ENCODE measurements at regions of chr1 and their contacts with region 1.

Region 1: GRCh38 chr1:154324669-154325582 is at the start of gene ATP8B2:
- DNase-seq: peak; percentile 60 to 82 (median 77)
- ATAC-seq: peak; percentile 80
- H3K4me3 ChIP-seq: peak within 1 kb of the TSS; percentile 79
- H3K4me3 Mint-ChIP-seq: peak within 1 kb of the TSS; percentile 92 to 98 (median 96)
- H3K27ac ChIP-seq: peak within 1 kb of the TSS; percentile 94
- H3K27ac Mint-ChIP-seq: peak within 1 kb of the TSS; percentile 80 to 95 (median 92)
- H3K4me1 ChIP-seq: peaks cover 24 to 36% of the 10 kb centered on the region in 2 donors
- H3K4me1 Mint-ChIP-seq: peaks cover 27 to 42% (median 38%) of the 10 kb centered on the region in 7 donors
- H3K27me3 ChIP-seq: no peaks in the 10 kb centered on the region
- H3K27me3 Mint-ChIP-seq: peaks cover 0 to 31% (median 0%) of the 10 kb centered on the region in 5 donors
- total RNA-seq, gene ATP8B2: 105 to 130 (median 117) TPM

Region 2: DNA sequence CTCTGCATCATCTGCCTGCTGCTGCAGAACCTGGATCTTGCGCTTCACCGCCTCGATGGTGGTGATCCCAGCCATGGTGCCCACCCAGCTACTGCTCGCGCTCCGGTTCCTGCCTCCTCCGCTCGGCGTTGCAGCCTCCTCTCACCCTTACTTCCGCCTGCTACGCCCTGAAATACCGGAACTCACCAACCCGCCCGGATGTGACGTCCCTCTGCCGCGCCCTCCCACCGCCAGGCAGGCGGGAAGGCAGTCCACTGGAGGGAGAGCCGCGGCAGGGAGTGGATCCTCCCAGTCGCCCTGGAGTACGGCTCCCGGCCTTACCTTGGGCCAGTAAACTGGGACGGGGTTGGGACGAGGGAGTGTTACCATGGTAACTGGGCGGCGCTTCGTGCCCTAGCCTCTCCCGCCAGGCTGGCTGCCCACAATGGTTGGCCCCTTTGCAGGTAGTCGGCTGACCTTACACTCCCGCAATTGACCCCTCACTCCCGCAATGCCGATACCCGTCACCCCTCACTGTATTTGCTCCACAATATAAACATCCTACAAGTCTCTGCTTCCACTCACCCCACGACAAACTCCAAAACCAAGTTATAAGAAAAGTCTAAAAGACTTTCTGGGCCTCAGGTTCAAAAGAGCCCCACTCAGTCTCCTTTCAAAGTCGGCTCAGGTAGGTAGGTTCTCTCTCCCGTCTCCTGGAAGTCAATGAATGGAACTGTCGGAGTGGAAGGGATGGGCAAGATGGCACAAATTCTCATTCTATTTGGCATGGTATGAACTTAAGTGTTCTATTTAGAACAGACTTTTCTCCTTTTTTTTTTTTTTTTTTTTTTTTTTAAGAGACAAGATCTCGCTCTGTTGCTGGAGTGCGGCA is 141.6 kb before region 1 on chr1:
- CTCF ChIA-PET with region 1: no interaction called
- POLR2A ChIA-PET with region 1: no interaction called
- intact Hi-C with region 1: loop called (anchors 2 kb)
- DNase-seq: peak; percentile 84 to 94 (median 94)
- ATAC-seq: peak; percentile 89
- H3K4me3 ChIP-seq: peak overlapping the region; percentile 93
- H3K4me3 Mint-ChIP-seq: peak overlapping the region; percentile 98 to 100 (median 100)
- H3K27ac ChIP-seq: peak overlapping the region; percentile 95
- H3K27ac Mint-ChIP-seq: peak overlapping the region; percentile 98 to 100 (median 99)
- H3K4me1 ChIP-seq: peaks cover 25 to 44% of the 10 kb centered on the region in 2 donors
- H3K4me1 Mint-ChIP-seq: peaks cover 44 to 49% (median 48%) of the 10 kb centered on the region in 7 donors
- H3K27me3 ChIP-seq: no peaks in the 10 kb centered on the region
- H3K27me3 Mint-ChIP-seq: peaks cover 0 to 7% (median 0%) of the 10 kb centered on the region in 5 donors

Region 3: DNA sequence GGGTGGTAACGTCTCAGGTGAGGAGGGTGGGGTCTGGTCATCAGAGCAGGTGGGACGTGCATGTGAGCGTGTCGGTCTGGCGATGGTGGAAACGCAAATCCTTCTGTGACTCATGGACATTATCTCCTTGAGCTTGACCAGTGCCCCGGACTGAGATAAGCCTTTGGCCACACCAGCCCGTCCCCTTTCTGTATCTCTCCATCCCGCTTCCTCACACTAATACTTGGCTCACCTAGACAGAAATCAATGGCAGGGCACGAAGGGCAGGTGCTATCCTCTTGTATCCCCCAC is 11.9 kb before region 1 on chr1:
- CTCF ChIA-PET with region 1: no interaction called
- POLR2A ChIA-PET with region 1: no interaction called
- intact Hi-C with region 1: no loop called
- DNase-seq: no peak
- ATAC-seq: no peak
- H3K4me3 ChIP-seq: no peak overlapping the region
- H3K4me3 Mint-ChIP-seq: no peak overlapping the region
- H3K27ac ChIP-seq: no peak overlapping the region
- H3K27ac Mint-ChIP-seq: no peak overlapping the region
- H3K4me1 ChIP-seq: no peaks in the 10 kb centered on the region
- H3K4me1 Mint-ChIP-seq: peaks cover 0 to 6% (median 0%) of the 10 kb centered on the region in 7 donors
- H3K27me3 ChIP-seq: no peaks in the 10 kb centered on the region
- H3K27me3 Mint-ChIP-seq: peaks cover 0 to 11% (median 0%) of the 10 kb centered on the region in 5 donors

Region 4: GRCh38 chr1:154335025-154335714 is 10.2 kb after region 1 on chr1:
- CTCF ChIA-PET with region 1: interaction called, 89 read pairs
- POLR2A ChIA-PET with region 1: interaction called, 160 read pairs
- intact Hi-C with region 1: loop called (anchors 1 kb)
- DNase-seq: peak; percentile 74 to 91 (median 87)
- ATAC-seq: peak; percentile 99
- H3K4me3 ChIP-seq: peak overlapping the region; percentile 23
- H3K4me3 Mint-ChIP-seq: peak overlapping the region; percentile 60 to 85 (median 72)
- H3K27ac ChIP-seq: peak overlapping the region; percentile 68
- H3K27ac Mint-ChIP-seq: peak overlapping the region; percentile 87 to 97 (median 95)
- H3K4me1 ChIP-seq: peaks cover 73% of the 10 kb centered on the region in 2 donors
- H3K4me1 Mint-ChIP-seq: peaks cover 50 to 88% (median 77%) of the 10 kb centered on the region in 7 donors
- H3K27me3 ChIP-seq: no peaks in the 10 kb centered on the region
- H3K27me3 Mint-ChIP-seq: no peaks in the 10 kb centered on the region

Region 5: GRCh38 chr1:154344977-154345837 is 20.3 kb after region 1 on chr1:
- CTCF ChIA-PET with region 1: interaction called, 129 read pairs
- POLR2A ChIA-PET with region 1: interaction called, 160 read pairs
- intact Hi-C with region 1: loop called (anchors 1 to 2 kb)
- DNase-seq: peak; percentile 56 to 79 (median 71)
- ATAC-seq: peak; percentile 55
- H3K4me3 ChIP-seq: peak overlapping the region; percentile 83
- H3K4me3 Mint-ChIP-seq: peak overlapping the region; percentile 79 to 98 (median 92)
- H3K27ac ChIP-seq: peak overlapping the region; percentile 61
- H3K27ac Mint-ChIP-seq: peak overlapping the region; percentile 31 to 100 (median 96)
- H3K4me1 ChIP-seq: peaks cover 60 to 71% of the 10 kb centered on the region in 2 donors
- H3K4me1 Mint-ChIP-seq: peaks cover 64 to 96% (median 73%) of the 10 kb centered on the region in 7 donors
- H3K27me3 ChIP-seq: no peaks in the 10 kb centered on the region
- H3K27me3 Mint-ChIP-seq: no peaks in the 10 kb centered on the region

Region 6: GRCh38 chr1:154352581-154353459 is 27.9 kb after region 1 on chr1:
- CTCF ChIA-PET with region 1: interaction called, 129 read pairs
- POLR2A ChIA-PET with region 1: interaction called, 160 read pairs
- intact Hi-C with region 1: loop called in 1 of 2 experiments (anchors 1 kb)
- DNase-seq: peak in 8 of 9 donors; percentile 45 to 58 (median 52)
- ATAC-seq: peak; percentile 84
- H3K4me3 ChIP-seq: peak overlapping the region; percentile 79
- H3K4me3 Mint-ChIP-seq: peak overlapping the region; percentile 76 to 98 (median 91)
- H3K27ac ChIP-seq: peak overlapping the region; percentile 74
- H3K27ac Mint-ChIP-seq: peak overlapping the region; percentile 66 to 97 (median 88)
- H3K4me1 ChIP-seq: peaks cover 13 to 32% of the 10 kb centered on the region in 2 donors
- H3K4me1 Mint-ChIP-seq: peaks cover 29 to 64% (median 48%) of the 10 kb centered on the region in 7 donors
- H3K27me3 ChIP-seq: no peaks in the 10 kb centered on the region
- H3K27me3 Mint-ChIP-seq: peaks cover 0 to 2% (median 0%) of the 10 kb centered on the region in 5 donors

Region 7: GRCh38 chr1:154463512-154463990 is 138.6 kb after region 1 on chr1:
- CTCF ChIA-PET with region 1: no interaction called
- POLR2A ChIA-PET with region 1: no interaction called
- intact Hi-C with region 1: no loop called
- DNase-seq: peak in 8 of 9 donors; percentile 50 to 79 (median 70)
- ATAC-seq: peak; percentile 82
- H3K4me3 ChIP-seq: no peak overlapping the region
- H3K4me3 Mint-ChIP-seq: peak overlapping the region; percentile 58 to 96 (median 80)
- H3K27ac ChIP-seq: peak overlapping the region; percentile 78
- H3K27ac Mint-ChIP-seq: peak overlapping the region; percentile 86 to 96 (median 94)
- H3K4me1 ChIP-seq: peaks cover 38 to 78% of the 10 kb centered on the region in 2 donors
- H3K4me1 Mint-ChIP-seq: peaks cover 58 to 94% (median 81%) of the 10 kb centered on the region in 7 donors
- H3K27me3 ChIP-seq: no peaks in the 10 kb centered on the region
- H3K27me3 Mint-ChIP-seq: no peaks in the 10 kb centered on the region

Region 8: GRCh38 chr1:154546264-154547063 is 221.5 kb after region 1 on chr1:
- CTCF ChIA-PET with region 1: interaction called, 3 read pairs
- POLR2A ChIA-PET with region 1: no interaction called
- intact Hi-C with region 1: loop called in 1 of 2 experiments (anchors 1 kb)
- DNase-seq: peak; percentile 18 to 56 (median 42)
- ATAC-seq: peak; percentile 89
- H3K4me3 ChIP-seq: no peak overlapping the region
- H3K4me3 Mint-ChIP-seq: no peak overlapping the region
- H3K27ac ChIP-seq: no peak overlapping the region
- H3K27ac Mint-ChIP-seq: peak overlapping the region in 5 of 9 donors; percentile 14 to 57 (median 21)
- H3K4me1 ChIP-seq: no peaks in the 10 kb centered on the region
- H3K4me1 Mint-ChIP-seq: peaks cover 2 to 28% (median 15%) of the 10 kb centered on the region in 7 donors
- H3K27me3 ChIP-seq: no peaks in the 10 kb centered on the region
- H3K27me3 Mint-ChIP-seq: peaks cover 0 to 10% (median 0%) of the 10 kb centered on the region in 5 donors

Region 9: GRCh38 chr1:154627257-154628120 is 302.6 kb after region 1 on chr1:
- CTCF ChIA-PET with region 1: no interaction called
- POLR2A ChIA-PET with region 1: no interaction called
- intact Hi-C with region 1: loop called in 1 of 2 experiments (anchors 5 kb)
- DNase-seq: peak; percentile 78 to 92 (median 90)
- ATAC-seq: peak; percentile 81
- H3K4me3 ChIP-seq: peak overlapping the region; percentile 72
- H3K4me3 Mint-ChIP-seq: peak overlapping the region; percentile 85 to 100 (median 94)
- H3K27ac ChIP-seq: peak overlapping the region; percentile 99
- H3K27ac Mint-ChIP-seq: peak overlapping the region; percentile 98 to 100 (median 99)
- H3K4me1 ChIP-seq: peaks cover 15% of the 10 kb centered on the region in 2 donors
- H3K4me1 Mint-ChIP-seq: peaks cover 20 to 54% (median 44%) of the 10 kb centered on the region in 7 donors
- H3K27me3 ChIP-seq: no peaks in the 10 kb centered on the region
- H3K27me3 Mint-ChIP-seq: peaks cover 0 to 20% (median 7%) of the 10 kb centered on the region in 5 donors

Region 10: DNA sequence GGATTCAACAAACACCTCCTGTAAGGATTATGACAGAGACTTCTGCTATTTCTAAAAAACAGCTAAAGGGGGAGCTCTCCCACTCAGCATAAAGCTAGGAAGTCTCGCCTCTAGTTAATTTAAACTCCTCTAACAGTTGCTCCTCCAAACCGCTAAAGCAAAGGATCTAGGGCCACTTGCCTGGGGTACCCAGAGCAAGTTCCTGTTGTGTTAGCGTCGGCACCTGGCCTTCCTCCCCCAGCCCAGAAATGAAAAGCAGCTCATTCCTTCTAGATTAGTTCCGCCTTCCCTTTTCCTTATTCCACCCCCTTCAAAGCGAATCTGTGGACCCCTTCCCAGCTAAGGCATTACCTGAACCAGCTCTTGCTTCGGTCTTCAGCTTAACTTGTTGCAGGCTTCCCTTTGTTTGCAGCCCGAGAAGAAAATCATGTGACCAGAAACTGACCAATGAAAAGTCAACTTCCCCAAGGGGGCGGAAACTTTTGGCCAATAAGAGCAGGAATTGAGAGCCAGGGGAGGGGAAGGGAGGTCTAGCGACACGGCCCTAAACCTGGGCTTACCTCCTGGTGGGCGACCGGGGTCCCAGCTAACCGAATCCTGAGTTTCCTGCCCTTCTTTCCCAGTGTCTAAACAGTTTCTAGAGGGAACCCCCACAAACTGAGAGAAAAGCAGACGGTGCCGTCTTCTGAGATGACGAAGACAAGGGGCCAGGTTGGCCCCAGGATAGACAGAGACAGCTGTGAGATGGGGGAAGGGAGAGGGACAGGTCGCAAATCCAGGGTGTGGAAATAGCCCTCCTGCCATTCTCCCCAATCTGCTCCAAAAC is 631.0 kb after region 1 on chr1 and contains the start of gene PBXIP1:
- CTCF ChIA-PET with region 1: no interaction called
- POLR2A ChIA-PET with region 1: no interaction called
- intact Hi-C with region 1: no loop called
- DNase-seq: peak; percentile 56 to 95 (median 92)
- ATAC-seq: peak; percentile 58
- H3K4me3 ChIP-seq: peak within 1 kb of the TSS; percentile 92
- H3K4me3 Mint-ChIP-seq: peak within 1 kb of the TSS; percentile 92 to 99 (median 98)
- H3K27ac ChIP-seq: peak within 1 kb of the TSS; percentile 96
- H3K27ac Mint-ChIP-seq: peak within 1 kb of the TSS; percentile 97 to 100 (median 99)
- H3K4me1 ChIP-seq: peaks cover 53 to 54% of the 10 kb centered on the region in 2 donors
- H3K4me1 Mint-ChIP-seq: peaks cover 59 to 87% (median 76%) of the 10 kb centered on the region in 7 donors
- H3K27me3 ChIP-seq: no peaks in the 10 kb centered on the region
- H3K27me3 Mint-ChIP-seq: no peaks in the 10 kb centered on the region
- total RNA-seq, gene PBXIP1: 107 to 390 (median 383) TPM

Measured in naive thymus-derived CD4-positive, alpha-beta T cell (primary cell).